HAP-1 (cell line): ENCODE measurements at regions of chr12 and their contacts with region 1.

Region 1: DNA sequence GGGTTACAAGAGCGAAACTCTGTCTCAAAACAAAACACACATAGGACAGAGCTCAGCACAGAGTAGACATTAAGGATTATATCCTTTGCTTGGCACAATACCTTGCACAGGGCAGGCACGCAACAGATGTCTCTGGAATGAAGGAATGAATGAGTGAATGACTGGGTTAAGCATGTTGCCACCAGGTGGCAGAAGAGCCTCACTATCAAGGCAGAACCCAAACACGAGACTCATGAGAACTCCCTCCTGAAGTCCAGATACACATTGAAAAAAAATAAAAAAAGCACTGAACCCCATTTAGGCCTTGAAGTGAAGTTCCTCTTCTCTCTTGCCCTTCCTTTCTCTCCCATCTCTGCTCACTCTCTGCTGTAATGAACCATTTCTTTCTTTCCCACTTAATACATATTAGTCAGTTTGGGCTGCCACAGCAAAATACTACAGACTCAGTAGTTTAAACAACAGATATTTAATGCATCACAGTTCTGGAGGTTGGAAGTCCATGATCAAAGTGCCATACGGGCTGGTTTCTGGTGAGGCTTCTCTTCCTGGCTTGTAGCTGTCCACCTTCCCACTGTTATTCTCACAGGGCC is 26.6 kb upstream of the LTA4H start:
- DNase-seq: peak; percentile 61 to 75
- H3K4me3 ChIP-seq: no peak overlapping the region
- H3K4me1 ChIP-seq: no peaks in the 10 kb centered on the region
- H3K27me3 ChIP-seq: no peaks in the 10 kb centered on the region

Region 2: DNA sequence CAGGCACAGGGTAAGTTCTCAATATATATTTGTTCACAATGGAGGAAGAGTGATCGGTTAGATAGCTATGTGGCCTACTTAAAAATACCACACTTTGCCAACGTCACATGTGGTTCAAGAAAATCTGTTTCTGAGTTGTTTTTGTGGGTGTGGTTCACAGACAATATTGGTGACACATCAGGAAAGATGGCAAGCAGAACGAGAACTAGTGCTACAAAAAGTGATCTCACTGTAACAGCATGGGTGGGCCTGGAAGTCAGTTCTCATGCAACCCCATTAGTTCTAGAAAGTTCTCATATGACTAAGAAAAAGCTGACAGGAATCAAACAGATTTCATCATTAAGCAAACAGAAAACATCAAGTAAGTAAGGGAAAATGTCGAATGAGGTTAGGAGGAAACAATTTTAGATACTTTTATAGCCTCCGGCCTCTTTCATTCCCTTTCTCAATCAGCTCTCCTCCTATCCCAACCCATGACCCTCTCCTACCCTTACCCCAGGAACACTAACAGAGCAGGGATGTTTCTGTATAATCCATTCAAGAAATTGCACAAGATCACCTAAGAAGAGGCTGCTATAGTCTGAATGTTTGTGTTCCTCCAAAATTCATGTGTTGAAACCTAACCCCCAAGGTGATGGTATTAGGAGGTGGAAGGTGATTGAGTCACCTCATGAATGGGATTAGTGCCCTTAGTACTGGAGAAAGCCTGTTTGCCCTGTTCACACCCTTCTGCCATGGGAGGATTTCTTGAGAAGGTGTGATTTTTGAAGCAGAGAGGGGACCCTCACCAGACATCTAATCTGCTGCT is 255.9 kb before region 1 on chr12:
- in situ Hi-C with region 1: no loop called
- DNase-seq: no peak
- H3K4me3 ChIP-seq: no peak overlapping the region
- H3K4me1 ChIP-seq: no peaks in the 10 kb centered on the region
- H3K27me3 ChIP-seq: no peaks in the 10 kb centered on the region

Region 3: GRCh38 chr12:96211988-96212387 is 150.0 kb after region 1 on chr12:
- in situ Hi-C with region 1: loop called (anchors 5 kb)
- DNase-seq: no peak
- H3K4me3 ChIP-seq: no peak overlapping the region
- H3K4me1 ChIP-seq: no peaks in the 10 kb centered on the region
- H3K27me3 ChIP-seq: no peaks in the 10 kb centered on the region